A549 (cell line): ENCODE measurements at regions of chr16 and their contacts with region 1.

Region 1: DNA sequence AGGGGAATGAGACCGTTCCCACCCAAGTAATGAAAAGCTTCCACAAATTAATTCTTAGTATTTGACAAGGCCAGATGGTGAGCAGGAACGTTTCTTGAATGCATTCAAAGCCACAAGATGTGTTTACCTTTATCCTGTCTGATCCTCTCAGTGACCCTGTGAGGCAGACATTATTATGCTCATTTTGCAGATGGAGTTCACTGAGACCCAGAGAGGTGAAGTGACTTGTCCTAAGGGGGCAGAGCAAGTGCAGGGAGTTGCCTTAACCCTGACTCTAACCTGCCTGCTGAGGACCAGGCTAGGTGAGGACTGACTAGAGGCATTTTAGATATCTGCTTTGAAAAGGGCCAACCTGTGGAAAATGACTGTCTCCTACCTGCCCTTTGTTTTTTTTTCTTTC is 156.7 kb downstream of the HAPSTR1 start:
- DNase-seq: no peak
- ATAC-seq: 0 out of 6 replicates have a peak, but pooled peaks of 1 of the 2 experiments have one; percentile 19
- H3K4me3 ChIP-seq: no peak overlapping the region
- H3K27ac ChIP-seq: no peak overlapping the region
- H3K4me1 ChIP-seq: no peaks in the 10 kb centered on the region
- CTCF ChIP-seq: no peak
- EP300 ChIP-seq: no peak
- POLR2A ChIP-seq: no peak
- RAD21 ChIP-seq: no peak

Region 2: GRCh38 chr16:9258423-9259051 is 10.4 kb after region 1 on chr16:
- CTCF ChIA-PET with region 1: interaction called, 10 read pairs
- POLR2A ChIA-PET with region 1: no interaction called
- DNase-seq: peak; percentile 52 to 54
- ATAC-seq: peak; percentile 76 to 90
- H3K4me3 ChIP-seq: no peak overlapping the region
- H3K27ac ChIP-seq: no peak overlapping the region
- H3K4me1 ChIP-seq: no peaks in the 10 kb centered on the region
- CTCF ChIP-seq: peak; percentile 70
- EP300 ChIP-seq: no peak
- POLR2A ChIP-seq: no peak
- RAD21 ChIP-seq: peak; percentile 78 to 87

Region 3: GRCh38 chr16:9275377-9275776 is 27.2 kb after region 1 on chr16:
- CTCF ChIA-PET with region 1: no interaction called
- POLR2A ChIA-PET with region 1: no interaction called
- DNase-seq: no peak
- ATAC-seq: no peak
- H3K4me3 ChIP-seq: no peak overlapping the region
- H3K27ac ChIP-seq: no peak overlapping the region
- H3K4me1 ChIP-seq: no peaks in the 10 kb centered on the region
- CTCF ChIP-seq: no peak
- EP300 ChIP-seq: no peak
- POLR2A ChIP-seq: no peak
- RAD21 ChIP-seq: no peak